ENCODE measurements at regions of chr14 and their contacts with region 1.

Region 1: GRCh38 chr14:54566410-54567223 is at the start of gene SAMD4A:
- DNase-seq: peak; percentile 73
- ATAC-seq: peak; percentile 28
- H3K4me3 Mint-ChIP-seq: peak within 1 kb of the TSS; percentile 84
- H3K27ac Mint-ChIP-seq: peak within 1 kb of the TSS; percentile 86
- H3K4me1 Mint-ChIP-seq: peaks cover 19% of the 10 kb centered on the region
- H3K27me3 Mint-ChIP-seq: peaks cover 18% of the 10 kb centered on the region
- CTCF ChIP-seq: peak; percentile 29
- total RNA-seq, gene SAMD4A: 4.5 to 4.9 TPM

Region 2: DNA sequence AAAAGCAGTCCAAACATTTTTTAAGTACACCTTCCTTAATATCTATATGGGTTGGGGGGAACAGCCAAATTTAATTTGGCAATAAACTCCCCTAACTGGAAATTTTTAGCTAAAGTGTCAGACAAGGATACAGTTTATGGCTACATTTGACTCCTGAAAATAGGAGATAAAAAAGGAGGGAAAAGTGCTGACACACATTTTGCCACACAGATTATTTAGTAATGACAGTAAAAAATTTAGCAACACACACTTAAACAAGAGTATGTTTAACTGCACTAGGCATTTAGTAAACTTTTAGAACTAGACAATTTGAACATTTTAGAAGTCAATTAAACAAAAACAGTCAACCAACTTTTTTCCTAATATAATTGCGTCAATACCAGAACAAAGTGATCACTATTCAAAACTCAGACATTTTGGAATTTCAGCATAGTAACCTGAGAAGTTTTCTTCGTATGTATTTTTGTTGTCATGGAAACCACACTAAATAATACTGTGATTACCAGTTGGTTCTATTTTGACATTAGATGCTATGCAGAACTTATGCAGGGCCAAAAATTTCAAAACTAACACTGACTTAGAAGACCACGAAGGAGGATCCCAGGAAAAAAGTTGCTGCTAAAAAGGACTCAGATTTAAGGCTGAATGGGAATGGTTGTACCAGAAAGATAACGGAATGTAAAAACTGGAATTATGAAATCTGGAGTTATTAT is 91.3 kb before region 1 on chr14:
- CTCF ChIA-PET with region 1: no interaction called
- POLR2A ChIA-PET with region 1: no interaction called
- intact Hi-C with region 1: no loop called
- DNase-seq: no peak
- ATAC-seq: no peak
- H3K4me3 Mint-ChIP-seq: no peak overlapping the region
- H3K27ac Mint-ChIP-seq: no peak overlapping the region
- H3K4me1 Mint-ChIP-seq: peaks cover 10% of the 10 kb centered on the region
- H3K27me3 Mint-ChIP-seq: no peaks in the 10 kb centered on the region
- CTCF ChIP-seq: no peak

Region 3: DNA sequence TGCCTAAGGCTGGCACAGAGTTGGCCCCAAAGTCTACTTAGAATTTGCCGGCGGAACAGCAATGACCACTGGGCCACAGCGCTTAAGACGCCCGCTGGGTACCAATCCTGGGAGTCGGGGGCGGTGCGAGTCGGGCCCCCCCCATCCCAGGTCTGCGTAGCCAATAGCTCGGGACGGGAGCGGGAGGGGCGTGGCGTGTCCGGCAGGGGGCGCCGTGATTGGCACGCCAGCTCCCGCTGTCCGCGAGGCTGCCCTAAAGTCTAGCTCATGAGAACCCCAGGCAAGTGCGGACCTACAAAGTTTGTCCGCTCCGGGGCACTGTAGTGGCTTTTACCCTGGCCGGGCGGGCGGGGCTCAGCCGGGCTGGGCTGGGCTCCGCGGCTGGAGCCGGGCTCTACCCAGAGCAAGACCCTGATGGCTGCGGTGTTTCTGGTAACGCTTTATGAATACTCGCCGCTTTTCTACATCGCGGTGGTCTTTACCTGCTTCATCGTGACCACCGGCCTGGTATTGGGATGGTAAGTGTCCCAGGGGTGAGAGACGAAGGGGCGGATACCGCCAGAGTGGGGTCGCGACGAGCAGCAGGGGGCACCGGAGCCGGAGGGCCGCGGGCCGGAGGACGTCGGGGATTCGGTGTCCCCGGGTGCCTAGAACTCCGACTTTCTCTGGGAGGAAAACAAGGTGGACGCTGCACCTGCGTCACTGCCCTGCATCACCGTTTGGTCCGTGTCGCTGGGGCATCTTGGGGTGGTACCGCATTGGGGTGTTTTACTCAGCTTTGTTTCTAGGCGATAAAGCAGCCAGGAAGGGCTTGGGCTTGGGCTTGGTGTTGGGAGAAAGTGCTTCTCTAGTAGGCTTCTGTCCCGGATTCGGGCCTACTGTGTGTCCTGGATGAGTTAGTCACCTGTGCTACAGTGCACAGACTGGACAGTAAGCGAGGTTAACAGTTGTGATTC is 56.8 kb before region 1 on chr14 and contains the start of gene CGRRF1:
- CTCF ChIA-PET with region 1: interaction called, 10 read pairs
- POLR2A ChIA-PET with region 1: interaction called, 3 read pairs
- intact Hi-C with region 1: no loop called
- DNase-seq: peak; percentile 99
- ATAC-seq: peak; percentile 98
- H3K4me3 Mint-ChIP-seq: peak within 1 kb of the TSS; percentile 92
- H3K27ac Mint-ChIP-seq: peak within 1 kb of the TSS; percentile 82
- H3K4me1 Mint-ChIP-seq: peaks cover 39% of the 10 kb centered on the region
- H3K27me3 Mint-ChIP-seq: peaks cover 2% of the 10 kb centered on the region
- CTCF ChIP-seq: no peak
- total RNA-seq, gene CGRRF1: 9.6 to 10.0 TPM

Region 4: GRCh38 chr14:54642801-54643697 is 76.4 kb after region 1 on chr14:
- CTCF ChIA-PET with region 1: interaction called, 11 read pairs
- POLR2A ChIA-PET with region 1: interaction called, 3 read pairs
- intact Hi-C with region 1: no loop called
- DNase-seq: peak; percentile 12
- ATAC-seq: no peak
- H3K4me3 Mint-ChIP-seq: no peak overlapping the region
- H3K27ac Mint-ChIP-seq: no peak overlapping the region
- H3K4me1 Mint-ChIP-seq: peaks cover 16% of the 10 kb centered on the region
- H3K27me3 Mint-ChIP-seq: peaks cover 3% of the 10 kb centered on the region
- CTCF ChIP-seq: no peak

Region 5: GRCh38 chr14:54669721-54670561 is 103.3 kb after region 1 on chr14:
- CTCF ChIA-PET with region 1: interaction called, 5 read pairs
- POLR2A ChIA-PET with region 1: interaction called, 13 read pairs
- intact Hi-C with region 1: no loop called
- DNase-seq: peak; percentile 61
- ATAC-seq: peak; percentile 82
- H3K4me3 Mint-ChIP-seq: no peak overlapping the region
- H3K27ac Mint-ChIP-seq: no peak overlapping the region
- H3K4me1 Mint-ChIP-seq: peaks cover 22% of the 10 kb centered on the region
- H3K27me3 Mint-ChIP-seq: peaks cover 35% of the 10 kb centered on the region
- CTCF ChIP-seq: no peak

Region 6: DNA sequence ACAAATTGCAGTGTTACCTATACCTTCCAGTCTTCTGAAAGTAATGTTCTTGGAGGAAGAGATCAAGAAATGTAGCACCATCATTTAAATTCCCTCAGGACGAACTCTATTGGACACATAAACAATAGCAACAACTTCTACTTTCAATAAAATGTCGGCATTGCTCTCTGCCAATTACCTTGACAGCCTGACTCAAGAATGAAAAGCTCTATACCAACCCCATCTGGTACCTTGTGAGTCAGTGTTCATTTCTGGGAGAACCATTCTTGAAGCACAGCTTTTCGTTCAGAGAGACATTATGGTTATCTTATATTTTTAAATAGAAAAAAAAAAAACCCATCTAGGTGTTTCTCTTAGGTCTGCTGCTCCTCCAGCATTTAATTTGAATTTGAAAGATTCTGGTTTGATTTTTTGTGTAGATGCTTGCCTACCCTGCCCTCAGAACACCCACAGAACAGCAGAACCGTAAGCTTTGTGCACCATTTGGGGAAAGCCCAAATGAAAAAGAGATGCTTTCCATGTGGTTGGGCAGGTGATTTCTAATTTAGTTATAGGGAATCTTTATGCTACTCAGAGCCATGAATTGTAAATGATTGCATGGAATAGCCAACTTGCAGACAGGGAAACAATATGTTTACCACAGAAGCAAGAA is 156.3 kb after region 1 on chr14:
- CTCF ChIA-PET with region 1: interaction called, 11 read pairs
- POLR2A ChIA-PET with region 1: no interaction called
- intact Hi-C with region 1: loop called (anchors 5 kb)
- DNase-seq: peak; percentile 26
- ATAC-seq: peak; percentile 77
- H3K4me3 Mint-ChIP-seq: no peak overlapping the region
- H3K27ac Mint-ChIP-seq: no peak overlapping the region
- H3K4me1 Mint-ChIP-seq: peaks cover 12% of the 10 kb centered on the region
- H3K27me3 Mint-ChIP-seq: peaks cover 19% of the 10 kb centered on the region
- CTCF ChIP-seq: peak; percentile 55

Region 7: DNA sequence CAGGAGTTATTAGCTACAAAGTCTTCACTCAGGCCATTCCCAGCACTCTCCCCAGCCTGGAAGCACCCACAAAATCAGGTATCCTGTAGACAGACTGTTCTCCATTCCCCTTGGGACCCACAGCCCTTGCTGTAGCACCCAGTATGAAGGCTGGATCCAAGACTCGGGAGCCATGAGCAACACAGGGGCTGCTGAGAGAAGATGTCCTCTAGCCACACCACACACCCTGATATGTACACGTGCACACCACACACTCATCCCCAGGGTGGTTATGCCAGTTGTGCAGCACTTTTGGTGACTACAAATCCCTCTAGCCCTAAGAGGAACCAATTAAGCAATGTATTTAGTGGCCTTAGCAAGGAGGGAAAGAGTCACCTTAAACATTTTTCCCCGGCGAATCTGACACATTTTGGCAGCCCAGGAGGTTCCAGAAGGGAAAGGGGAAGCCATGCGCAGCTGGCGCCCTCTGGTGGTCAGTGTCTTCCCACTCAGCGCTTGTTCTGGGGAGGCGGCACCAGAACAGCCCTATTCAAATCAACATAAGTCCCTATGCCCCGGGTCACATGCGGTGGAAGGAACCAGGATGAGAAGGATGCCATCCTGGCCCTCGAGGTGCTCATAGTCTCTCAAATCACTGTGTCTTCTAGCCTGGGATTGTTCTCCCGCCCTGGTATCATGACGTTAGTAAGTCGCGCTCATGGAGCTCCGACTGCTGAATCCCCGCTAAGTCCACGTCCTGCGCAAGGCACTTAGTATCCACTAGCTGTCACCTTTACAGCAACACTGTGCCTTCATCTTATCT is 239.1 kb after region 1 on chr14:
- CTCF ChIA-PET with region 1: interaction called, 93 read pairs
- POLR2A ChIA-PET with region 1: interaction called, 4 read pairs
- intact Hi-C with region 1: loop called (anchors 2 kb)
- DNase-seq: peak; percentile 86
- ATAC-seq: peak; percentile 88
- H3K4me3 Mint-ChIP-seq: no peak overlapping the region
- H3K27ac Mint-ChIP-seq: no peak overlapping the region
- H3K4me1 Mint-ChIP-seq: peaks cover 2% of the 10 kb centered on the region
- H3K27me3 Mint-ChIP-seq: peaks cover 21% of the 10 kb centered on the region
- CTCF ChIP-seq: peak; percentile 93

Region 8: GRCh38 chr14:54881235-54881760 is 314.7 kb after region 1 on chr14:
- CTCF ChIA-PET with region 1: interaction called, 3 read pairs
- POLR2A ChIA-PET with region 1: interaction called, 3 read pairs
- intact Hi-C with region 1: loop called (anchors 10 kb)
- DNase-seq: peak; percentile 45
- ATAC-seq: peak; percentile 61
- H3K4me3 Mint-ChIP-seq: peak overlapping the region; percentile 77
- H3K27ac Mint-ChIP-seq: peak overlapping the region; percentile 97
- H3K4me1 Mint-ChIP-seq: peaks cover 40% of the 10 kb centered on the region
- H3K27me3 Mint-ChIP-seq: no peaks in the 10 kb centered on the region
- CTCF ChIP-seq: no peak

Measured in activated CD8-positive, alpha-beta T cell treated with anti-CD3 and anti-CD28 coated beads for 36 hours (primary cell).